Common myeloid progenitor, CD34-positive (primary cell): ENCODE measurements at regions of chr19 and their contacts with region 1.

Region 1: GRCh38 chr19:55301459-55302317 is 17.9 kb downstream of the BRSK1 start:
- DNase-seq: peak; percentile 84 to 93 (median 91)
- H3K4me3 ChIP-seq: peak overlapping the region; percentile 37 to 88 (median 69)
- H3K27ac ChIP-seq: peak overlapping the region; percentile 30 to 77
- H3K4me1 ChIP-seq: peaks cover 0 to 20% (median 13%) of the 10 kb centered on the region in 4 experiments
- H3K27me3 ChIP-seq: no peaks in the 10 kb centered on the region

Region 2: GRCh38 chr19:55289117-55289796 is 12.4 kb before region 1 on chr19:
- CTCF ChIA-PET with region 1: interaction called, 30 read pairs
- POLR2A ChIA-PET with region 1: no interaction called
- DNase-seq: no peak
- H3K4me3 ChIP-seq: no peak overlapping the region
- H3K27ac ChIP-seq: no peak overlapping the region
- H3K4me1 ChIP-seq: peaks cover 0 to 5% (median 1%) of the 10 kb centered on the region in 4 experiments
- H3K27me3 ChIP-seq: no peaks in the 10 kb centered on the region

Region 3: DNA sequence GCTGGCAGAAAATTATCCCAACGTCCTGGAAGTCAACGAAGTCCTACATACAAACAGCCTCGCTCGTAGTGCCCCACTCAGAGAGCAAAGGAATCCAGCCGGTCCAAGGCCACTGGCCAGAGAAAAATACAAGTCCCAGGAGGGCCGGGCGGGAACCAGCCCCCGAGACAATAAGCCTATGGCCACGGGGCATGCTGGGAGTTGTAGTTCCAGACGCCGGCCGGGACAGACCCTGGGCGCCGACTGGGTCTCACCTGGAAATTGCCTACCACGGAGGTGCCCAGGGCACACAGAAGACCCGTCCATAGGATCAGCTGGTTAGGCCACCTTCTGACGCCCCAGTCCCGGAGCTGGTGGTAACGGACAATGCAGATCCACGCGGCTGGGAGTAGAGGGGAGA is 18.1 kb after region 1 on chr19:
- CTCF ChIA-PET with region 1: interaction called, 30 read pairs
- POLR2A ChIA-PET with region 1: interaction called, 3 read pairs
- DNase-seq: no peak
- H3K4me3 ChIP-seq: peak overlapping the region in 2 of 7 experiments; percentile 24 to 64
- H3K27ac ChIP-seq: no peak overlapping the region
- H3K4me1 ChIP-seq: peaks cover 0 to 38% (median 32%) of the 10 kb centered on the region in 4 experiments
- H3K27me3 ChIP-seq: no peaks in the 10 kb centered on the region

Region 4: GRCh38 chr19:55339048-55339888 is 37.6 kb after region 1 on chr19 and contains the start of gene KMT5C:
- CTCF ChIA-PET with region 1: interaction called, 19 read pairs
- POLR2A ChIA-PET with region 1: interaction called, 7 read pairs
- DNase-seq: peak; percentile 100
- H3K4me3 ChIP-seq: peak within 1 kb of the TSS; percentile 55 to 85 (median 81)
- H3K27ac ChIP-seq: peak within 1 kb of the TSS; percentile 99 to 100
- H3K4me1 ChIP-seq: peaks cover 0 to 27% (median 25%) of the 10 kb centered on the region in 4 experiments
- H3K27me3 ChIP-seq: no peaks in the 10 kb centered on the region

Region 5: DNA sequence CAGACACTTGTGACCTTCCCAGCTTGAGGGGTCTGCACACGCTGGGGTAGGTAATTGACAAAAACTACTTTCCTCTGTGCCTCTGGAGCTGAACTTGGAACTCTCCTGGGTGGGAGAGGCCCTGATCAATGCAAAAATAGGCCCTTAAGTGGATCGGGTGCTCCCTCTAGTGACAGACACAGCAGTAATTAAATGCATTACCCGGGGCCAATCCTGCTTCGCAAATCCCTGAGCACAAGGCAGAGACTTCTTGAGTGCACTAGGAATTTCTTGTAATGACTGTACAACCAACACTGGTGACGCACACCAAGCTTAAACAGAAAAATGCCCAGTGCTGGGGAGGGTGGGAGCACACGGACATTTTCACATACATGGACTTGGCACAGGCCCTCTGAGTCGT is 116.5 kb after region 1 on chr19:
- CTCF ChIA-PET with region 1: interaction called, 13 read pairs
- POLR2A ChIA-PET with region 1: interaction called, 4 read pairs
- DNase-seq: peak; percentile 78 to 86 (median 82)
- H3K4me3 ChIP-seq: no peak overlapping the region
- H3K27ac ChIP-seq: no peak overlapping the region
- H3K4me1 ChIP-seq: peaks cover 6 to 40% (median 31%) of the 10 kb centered on the region in 4 experiments
- H3K27me3 ChIP-seq: no peaks in the 10 kb centered on the region